IMR-90 (cell line): ENCODE measurements at regions of chr20 and their contacts with region 1.

Region 1: GRCh38 chr20:43642548-43642947 is 24.4 kb upstream of the MYBL2 start:
- DNase-seq: no peak
- ATAC-seq: no peak
- H3K4me3 ChIP-seq: no peak overlapping the region
- H3K27ac ChIP-seq: no peak overlapping the region
- H3K4me1 ChIP-seq: no peaks in the 10 kb centered on the region
- H3K27me3 ChIP-seq: no peaks in the 10 kb centered on the region
- CTCF ChIP-seq: no peak
- POLR2A ChIP-seq: no peak
- RAD21 ChIP-seq: no peak

Region 2: DNA sequence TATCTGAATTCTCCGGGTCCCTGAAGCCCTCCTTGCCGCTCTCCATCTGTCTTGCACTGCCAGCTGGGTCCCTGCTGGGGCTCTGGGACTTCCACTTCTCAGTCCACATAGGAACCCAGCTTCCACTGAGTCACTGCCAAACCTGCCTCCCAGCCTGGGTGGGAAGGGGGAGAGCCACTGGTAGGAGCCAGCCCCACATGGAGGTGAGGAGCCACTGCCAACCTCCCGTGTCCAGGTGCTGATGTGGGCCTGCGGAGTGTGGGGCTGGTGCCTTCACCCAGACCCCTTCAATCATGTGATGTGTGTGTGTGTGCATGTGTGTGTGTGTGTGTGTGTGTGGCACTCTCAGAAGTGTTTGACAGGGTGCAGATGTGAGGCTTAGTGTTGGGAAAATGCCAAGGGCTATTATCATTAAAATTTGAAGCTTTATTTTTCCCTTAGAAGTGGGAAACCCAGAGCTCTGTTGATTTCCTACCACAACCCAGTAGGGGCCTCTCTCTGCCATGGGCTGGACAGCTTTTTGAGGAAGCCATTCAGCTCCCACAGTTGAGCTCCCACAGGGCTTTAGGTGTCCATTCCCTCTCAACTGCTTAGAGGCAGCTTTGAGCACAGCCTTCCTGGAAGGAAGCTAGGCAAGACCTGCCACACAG is 93.0 kb before region 1 on chr20:
- CTCF ChIA-PET with region 1: no interaction called
- POLR2A ChIA-PET with region 1: no interaction called
- dilution Hi-C with region 1: no loop called
- in situ Hi-C with region 1: no loop called
- intact Hi-C with region 1: no loop called
- DNase-seq: no peak
- ATAC-seq: no peak
- H3K4me3 ChIP-seq: no peak overlapping the region
- H3K27ac ChIP-seq: no peak overlapping the region
- H3K4me1 ChIP-seq: no peaks in the 10 kb centered on the region
- H3K27me3 ChIP-seq: no peaks in the 10 kb centered on the region; the same call in 1 of the 2 replicates
- CTCF ChIP-seq: no peak
- POLR2A ChIP-seq: no peak
- RAD21 ChIP-seq: no peak

Region 3: GRCh38 chr20:43603136-43603535 is 39.4 kb before region 1 on chr20:
- CTCF ChIA-PET with region 1: no interaction called
- POLR2A ChIA-PET with region 1: interaction called, 12 read pairs
- dilution Hi-C with region 1: no loop called
- in situ Hi-C with region 1: no loop called
- intact Hi-C with region 1: no loop called
- DNase-seq: no peak
- ATAC-seq: no peak
- H3K4me3 ChIP-seq: no peak overlapping the region
- H3K27ac ChIP-seq: no peak overlapping the region
- H3K4me1 ChIP-seq: no peaks in the 10 kb centered on the region
- H3K27me3 ChIP-seq: no peaks in the 10 kb centered on the region
- CTCF ChIP-seq: no peak
- POLR2A ChIP-seq: no peak
- RAD21 ChIP-seq: no peak